ENCODE measurements at regions of chr2 and their contacts with region 1.

Region 1: DNA sequence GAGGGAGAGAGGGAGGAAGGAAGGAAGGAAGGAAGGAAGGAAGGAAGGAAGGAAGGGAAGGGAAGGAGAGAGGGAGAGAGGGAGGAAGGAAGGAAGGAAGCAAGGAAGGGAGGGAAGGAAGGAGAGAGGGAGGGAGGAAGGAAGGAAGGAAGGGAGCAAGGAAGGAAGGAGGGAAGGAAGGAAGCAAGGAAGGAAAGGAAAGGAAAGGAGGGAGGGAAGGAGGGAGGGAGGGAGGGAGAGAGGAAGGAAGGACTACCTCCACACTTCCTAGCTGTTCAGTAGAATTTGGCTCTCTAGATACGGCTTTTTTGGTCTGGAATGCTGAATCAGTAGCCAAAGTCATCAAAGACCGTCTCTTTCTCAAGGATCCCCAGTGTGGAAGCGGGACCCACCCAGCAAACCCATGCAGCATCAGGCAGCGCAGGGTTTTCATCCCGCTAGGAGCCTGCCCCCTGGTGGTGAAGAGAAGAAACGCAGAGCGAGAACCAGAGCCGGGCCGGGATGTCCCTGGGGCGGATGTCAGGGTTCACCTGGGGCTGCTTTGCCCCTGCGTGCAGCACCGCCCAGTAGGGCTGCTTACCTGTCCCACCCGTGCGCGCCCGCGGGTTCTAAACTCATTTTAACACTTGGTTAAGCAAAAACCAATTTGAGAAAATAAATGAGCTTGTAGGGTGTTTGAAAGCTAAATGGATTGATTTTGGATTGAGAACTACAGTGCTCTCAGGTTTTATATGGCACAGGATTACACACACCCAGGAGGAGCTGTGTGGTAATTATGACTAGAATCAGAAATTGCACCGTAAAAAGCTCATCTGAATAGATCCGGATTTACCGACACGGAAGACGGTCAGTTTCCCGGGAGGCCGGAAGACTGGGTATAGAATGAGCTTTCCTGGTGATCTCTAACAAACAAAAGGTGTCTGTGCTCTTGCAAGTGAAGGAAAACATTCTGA is 48.1 kb upstream of the ARL4C start:
- DNase-seq: peak; percentile 78 to 81
- ATAC-seq: peak; percentile 96 to 98
- H3K4me3 ChIP-seq: no peak overlapping the region
- H3K27ac ChIP-seq: peak overlapping the region; percentile 58 to 77; a peak in 5 of 6 replicates
- H3K4me1 ChIP-seq: peaks cover 3% of the 10 kb centered on the region; the same call in 1 of the 3 replicates
- CTCF ChIP-seq: peak; percentile 84
- EP300 ChIP-seq: no peak
- POLR2A ChIP-seq: no peak
- RAD21 ChIP-seq: peak; percentile 91 to 92

Region 2: DNA sequence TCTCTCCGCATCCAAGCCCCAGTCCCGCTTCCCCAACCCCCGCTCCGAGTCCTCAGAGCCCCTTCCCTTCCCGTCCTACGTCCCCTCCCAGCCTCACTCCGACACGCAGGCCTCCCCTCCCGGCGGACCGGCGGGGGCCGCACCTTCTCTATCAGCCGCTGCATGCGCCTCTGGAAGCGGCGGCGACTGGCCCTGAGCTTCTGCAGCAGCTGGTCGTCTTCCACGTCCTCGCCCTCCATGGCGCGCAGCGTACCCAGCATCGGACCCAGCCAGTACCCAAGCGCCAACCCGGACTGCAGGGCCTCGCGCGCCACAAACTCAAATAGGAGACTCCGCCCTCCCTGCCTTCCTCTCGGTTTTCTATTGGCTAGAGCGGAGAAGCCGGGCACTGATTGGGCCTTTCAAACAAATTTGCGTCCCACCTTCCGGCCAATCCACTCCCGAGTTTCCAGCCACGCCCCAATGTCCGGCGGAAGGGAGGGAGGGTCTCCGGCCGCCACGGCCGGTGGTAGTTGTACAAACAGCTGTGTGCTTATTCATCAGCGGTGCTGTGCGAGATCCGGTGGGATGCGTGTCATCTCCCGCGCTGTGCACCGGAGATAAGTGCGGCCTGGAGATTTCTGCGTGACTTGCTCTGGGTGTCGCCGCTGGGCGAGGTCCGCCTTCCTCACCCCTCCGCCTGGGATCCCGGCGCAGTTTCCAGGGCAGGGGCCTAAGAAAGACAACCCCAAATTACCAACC is 690.5 kb before region 1 on chr2 and contains the start of gene HJURP:
- CTCF ChIA-PET with region 1: interaction called, 42 read pairs
- POLR2A ChIA-PET with region 1: interaction called, 3 read pairs
- DNase-seq: peak; percentile 95 to 97
- ATAC-seq: peak; percentile 88 to 91
- H3K4me3 ChIP-seq: peak within 1 kb of the TSS; percentile 76
- H3K27ac ChIP-seq: peak within 1 kb of the TSS; percentile 85 to 97
- H3K4me1 ChIP-seq: peaks cover 50% of the 10 kb centered on the region
- CTCF ChIP-seq: no peak
- EP300 ChIP-seq: no peak
- POLR2A ChIP-seq: peak; percentile 78
- RAD21 ChIP-seq: no peak
- polyA plus RNA-seq, gene HJURP: 111 and 119 TPM in 2 replicates

Region 3: GRCh38 chr2:233976690-233977294 is 568.1 kb before region 1 on chr2:
- CTCF ChIA-PET with region 1: interaction called, 60 read pairs
- POLR2A ChIA-PET with region 1: no interaction called
- DNase-seq: peak; percentile 64 to 84
- ATAC-seq: peak; percentile 44 to 80; a peak in 4 of 6 replicates
- H3K4me3 ChIP-seq: no peak overlapping the region
- H3K27ac ChIP-seq: peak overlapping the region; percentile 84 to 98
- H3K4me1 ChIP-seq: peaks cover 83% of the 10 kb centered on the region
- CTCF ChIP-seq: peak; percentile 94
- EP300 ChIP-seq: peak in 1 of 2 experiments; percentile 42; a peak in 2 of 5 replicates
- POLR2A ChIP-seq: no peak
- RAD21 ChIP-seq: peak; percentile 97 to 98

Region 4: GRCh38 chr2:234135720-234136221 is 409.2 kb before region 1 on chr2:
- CTCF ChIA-PET with region 1: interaction called, 33 read pairs
- POLR2A ChIA-PET with region 1: no interaction called
- DNase-seq: peak; percentile 80 to 94
- ATAC-seq: peak; percentile 93 to 96
- H3K4me3 ChIP-seq: no peak overlapping the region
- H3K27ac ChIP-seq: peak overlapping the region; percentile 82 to 94
- H3K4me1 ChIP-seq: peaks cover 30% of the 10 kb centered on the region
- CTCF ChIP-seq: peak; percentile 92
- EP300 ChIP-seq: no peak
- POLR2A ChIP-seq: no peak
- RAD21 ChIP-seq: peak; percentile 99

Region 5: GRCh38 chr2:234257856-234258561 is 286.9 kb before region 1 on chr2:
- CTCF ChIA-PET with region 1: interaction called, 12 read pairs
- POLR2A ChIA-PET with region 1: no interaction called
- DNase-seq: peak; percentile 94 to 97
- ATAC-seq: peak; percentile 99
- H3K4me3 ChIP-seq: no peak overlapping the region
- H3K27ac ChIP-seq: peak overlapping the region; percentile 93 to 95
- H3K4me1 ChIP-seq: peaks cover 51% of the 10 kb centered on the region
- CTCF ChIP-seq: peak; percentile 77
- EP300 ChIP-seq: peak; percentile 93 to 94
- POLR2A ChIP-seq: no peak
- RAD21 ChIP-seq: peak; percentile 93 to 95

Region 6: GRCh38 chr2:234483568-234484251 is 61.2 kb before region 1 on chr2:
- CTCF ChIA-PET with region 1: no interaction called
- POLR2A ChIA-PET with region 1: no interaction called
- DNase-seq: peak in 1 of 2 experiments; percentile 43
- ATAC-seq: peak; percentile 60 to 75; a peak in 4 of 6 replicates
- H3K4me3 ChIP-seq: no peak overlapping the region
- H3K27ac ChIP-seq: peak overlapping the region in 1 of 2 experiments; percentile 59; a peak in 3 of 6 replicates
- H3K4me1 ChIP-seq: no peaks in the 10 kb centered on the region
- CTCF ChIP-seq: no peak
- EP300 ChIP-seq: no peak
- POLR2A ChIP-seq: no peak
- RAD21 ChIP-seq: no peak

Region 7: DNA sequence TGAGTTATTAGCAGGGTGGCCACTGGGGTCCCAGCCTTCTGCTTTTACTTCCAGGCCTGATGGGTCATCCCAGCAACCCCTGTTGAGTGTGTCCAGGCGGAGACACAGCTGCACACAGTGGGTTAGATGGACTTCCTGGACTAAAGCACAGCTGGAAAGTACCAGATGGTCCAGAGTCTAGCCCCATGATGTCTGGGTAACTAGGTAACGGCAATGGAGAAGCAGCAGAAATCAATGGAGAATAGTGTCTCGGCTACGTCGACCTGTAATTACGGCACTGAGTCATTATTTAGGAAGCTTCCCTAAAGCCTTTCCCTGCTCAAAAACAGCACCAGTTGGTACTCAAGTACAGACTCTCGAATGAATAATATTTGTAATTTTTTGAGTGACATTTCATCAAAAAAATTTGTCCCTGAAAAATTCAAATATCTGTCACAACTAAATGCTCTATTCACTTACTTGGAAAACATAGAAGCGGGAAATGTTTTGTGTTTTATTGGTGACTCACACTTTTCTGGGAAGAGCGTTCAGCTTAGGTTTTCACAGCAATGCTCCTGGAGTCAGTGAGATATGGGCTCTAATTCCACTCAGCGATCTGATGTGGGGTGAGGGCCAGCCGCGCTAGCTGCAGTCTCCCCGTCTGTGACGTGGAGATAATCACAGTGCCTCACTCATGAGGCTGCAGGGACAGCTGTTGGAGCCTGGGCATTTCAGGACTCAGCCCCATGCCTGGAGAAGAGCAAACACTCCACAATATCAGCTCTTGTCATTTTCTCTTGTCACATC is 31.9 kb before region 1 on chr2:
- CTCF ChIA-PET with region 1: interaction called, 10 read pairs
- POLR2A ChIA-PET with region 1: no interaction called
- DNase-seq: no peak
- ATAC-seq: no peak
- H3K4me3 ChIP-seq: no peak overlapping the region
- H3K27ac ChIP-seq: no peak overlapping the region
- H3K4me1 ChIP-seq: no peaks in the 10 kb centered on the region
- CTCF ChIP-seq: no peak
- EP300 ChIP-seq: no peak
- POLR2A ChIP-seq: no peak
- RAD21 ChIP-seq: no peak

Region 8: DNA sequence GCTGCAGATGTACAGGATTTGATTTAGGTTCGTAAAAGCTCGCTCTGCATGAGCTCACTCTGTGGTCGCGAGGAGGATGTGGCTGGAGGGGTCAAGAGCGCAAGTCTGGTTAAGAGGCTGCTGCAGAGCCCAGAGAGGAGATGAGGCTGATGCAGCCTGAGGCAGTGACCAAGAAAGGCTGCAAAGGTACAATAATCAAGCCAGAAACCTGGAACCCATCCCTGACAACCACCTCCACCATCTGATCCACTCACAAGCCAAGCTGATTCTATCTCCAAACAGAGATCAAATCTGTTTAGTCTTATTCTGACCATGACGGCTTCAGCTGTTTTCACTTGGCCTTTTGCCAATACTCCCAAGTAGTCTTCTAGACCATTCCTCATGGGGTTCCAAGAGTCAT is 10.8 kb after region 1 on chr2:
- CTCF ChIA-PET with region 1: interaction called, 19 read pairs
- POLR2A ChIA-PET with region 1: no interaction called
- DNase-seq: no peak
- ATAC-seq: no peak
- H3K4me3 ChIP-seq: no peak overlapping the region
- H3K27ac ChIP-seq: peak overlapping the region; percentile 52 to 77; a peak in 5 of 6 replicates
- H3K4me1 ChIP-seq: peaks cover 30% of the 10 kb centered on the region
- CTCF ChIP-seq: no peak
- EP300 ChIP-seq: no peak
- POLR2A ChIP-seq: no peak
- RAD21 ChIP-seq: no peak

Measured in A549 (cell line).